Naive thymus-derived CD8-positive, alpha-beta T cell (primary cell): ENCODE measurements at regions of chr19 and their contacts with region 1.

Region 1: GRCh38 chr19:19618219-19619051 is at the start of gene PBX4:
- DNase-seq: peak; percentile 96 to 100 (median 99)
- ATAC-seq: peak; percentile 92 to 93
- H3K4me3 Mint-ChIP-seq: peak within 1 kb of the TSS; percentile 72 to 97 (median 93)
- H3K27ac Mint-ChIP-seq: peak within 1 kb of the TSS; percentile 81 to 100 (median 97)
- H3K4me1 Mint-ChIP-seq: peaks cover 25 to 57% (median 49%) of the 10 kb centered on the region in 4 donors
- H3K27me3 Mint-ChIP-seq: no peaks in the 10 kb centered on the region
- polyA plus RNA-seq, gene PBX4: 2.6 to 6.9 (median 4.2) TPM

Region 2: DNA sequence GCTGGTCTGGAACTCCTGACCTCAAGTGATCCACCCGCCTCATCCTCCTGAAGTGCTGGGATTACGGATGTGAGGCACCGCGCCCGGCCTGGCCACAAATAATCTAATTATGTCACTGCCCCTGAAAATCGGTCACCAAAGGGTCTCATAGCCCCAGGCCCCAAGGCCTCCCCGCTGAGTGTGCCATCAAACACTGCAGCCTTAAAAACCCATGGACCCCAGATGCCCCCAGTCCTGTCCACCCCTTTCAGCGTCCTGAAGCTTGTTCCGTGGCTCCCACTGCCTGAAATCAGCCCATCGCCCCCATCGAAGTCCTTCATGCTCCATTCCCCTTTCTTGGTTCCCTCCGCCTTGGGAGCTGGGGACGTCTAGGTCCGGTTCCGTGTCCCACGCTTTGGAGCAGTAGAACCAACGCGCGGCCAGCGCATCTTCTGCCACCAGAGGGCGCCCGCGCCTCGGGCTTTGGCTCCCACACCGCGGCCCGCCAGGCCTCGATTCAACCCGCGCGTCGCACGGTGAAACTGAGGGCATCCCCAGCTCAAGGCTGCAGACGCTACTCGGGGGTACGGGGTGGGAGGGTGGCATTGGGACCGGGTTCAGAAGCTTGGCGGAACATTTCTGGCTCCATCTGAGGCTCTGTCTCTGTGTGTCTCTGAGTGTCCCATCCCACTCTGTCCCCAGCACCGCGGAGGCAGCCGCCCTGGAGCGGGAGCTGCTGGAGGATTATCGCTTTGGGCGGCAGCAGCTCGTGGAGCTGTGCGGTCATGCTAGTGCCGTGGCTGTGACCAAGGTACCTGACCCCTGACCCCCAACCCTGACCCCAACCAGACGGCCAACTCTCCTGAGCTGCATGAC is 86.3 kb before region 1 on chr19:
- POLR2A ChIA-PET with region 1: no interaction called
- DNase-seq: peak; percentile 73 to 90 (median 85)
- ATAC-seq: peak; percentile 83 to 89
- H3K4me3 Mint-ChIP-seq: peak overlapping the region in 3 of 10 donors; percentile 24 to 49 (median 28)
- H3K27ac Mint-ChIP-seq: peak overlapping the region in 7 of 10 donors; percentile 37 to 98 (median 88)
- H3K4me1 Mint-ChIP-seq: peaks cover 4 to 21% (median 17%) of the 10 kb centered on the region in 4 donors
- H3K27me3 Mint-ChIP-seq: no peaks in the 10 kb centered on the region

Region 3: DNA sequence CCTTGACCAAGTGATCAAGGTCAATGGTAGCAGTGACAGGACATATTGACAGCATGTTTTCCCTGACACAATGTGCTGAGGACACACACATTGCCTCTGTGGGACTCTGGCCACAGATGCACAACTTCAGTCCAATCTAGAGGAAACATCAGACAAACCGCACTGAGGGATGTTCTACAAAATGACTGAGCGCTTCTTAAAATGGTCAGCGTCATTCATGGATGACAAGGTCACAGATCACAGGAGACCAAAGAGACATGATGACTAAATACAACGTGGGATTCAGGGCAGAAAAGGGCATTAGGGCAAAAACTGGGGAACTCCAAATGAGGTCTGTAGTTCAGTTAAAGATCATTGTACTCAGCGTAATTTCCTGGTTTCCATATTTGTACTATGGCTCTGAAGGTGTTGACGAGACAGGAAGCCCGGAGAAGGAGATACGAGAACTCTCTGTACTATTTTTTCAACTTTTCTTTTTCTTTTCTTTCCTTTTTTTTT is 20.6 kb before region 1 on chr19:
- POLR2A ChIA-PET with region 1: interaction called, 23 read pairs
- DNase-seq: peak in 8 of 10 donors; percentile 62 to 87 (median 76)
- ATAC-seq: peak; percentile 69 to 81
- H3K4me3 Mint-ChIP-seq: peak overlapping the region; percentile 62 to 87 (median 80)
- H3K27ac Mint-ChIP-seq: peak overlapping the region; percentile 90 to 99 (median 98)
- H3K4me1 Mint-ChIP-seq: peaks cover 26 to 76% (median 57%) of the 10 kb centered on the region in 4 donors
- H3K27me3 Mint-ChIP-seq: no peaks in the 10 kb centered on the region